ENCODE measurements at regions of chr7 and their contacts with region 1.

Region 1: GRCh38 chr7:143214789-143215679 is 6.8 kb upstream of the TAS2R40 start:
- DNase-seq: peak; percentile 70
- ATAC-seq: peak; percentile 89
- H3K4me3 Mint-ChIP-seq: no peak overlapping the region
- H3K27ac Mint-ChIP-seq: no peak overlapping the region
- H3K4me1 Mint-ChIP-seq: no peaks in the 10 kb centered on the region
- H3K27me3 Mint-ChIP-seq: peaks cover 2% of the 10 kb centered on the region

Region 2: GRCh38 chr7:141975806-141976523 is 1239.1 kb before region 1 on chr7:
- CTCF ChIA-PET with region 1: interaction called, 4 read pairs
- POLR2A ChIA-PET with region 1: no interaction called
- intact Hi-C with region 1: loop called in 1 of 2 experiments (anchors 5 kb)
- DNase-seq: peak; percentile 87
- ATAC-seq: peak; percentile 96
- H3K4me3 Mint-ChIP-seq: peak overlapping the region; percentile 63
- H3K27ac Mint-ChIP-seq: peak overlapping the region; percentile 65
- H3K4me1 Mint-ChIP-seq: peaks cover 10% of the 10 kb centered on the region
- H3K27me3 Mint-ChIP-seq: no peaks in the 10 kb centered on the region

Region 3: DNA sequence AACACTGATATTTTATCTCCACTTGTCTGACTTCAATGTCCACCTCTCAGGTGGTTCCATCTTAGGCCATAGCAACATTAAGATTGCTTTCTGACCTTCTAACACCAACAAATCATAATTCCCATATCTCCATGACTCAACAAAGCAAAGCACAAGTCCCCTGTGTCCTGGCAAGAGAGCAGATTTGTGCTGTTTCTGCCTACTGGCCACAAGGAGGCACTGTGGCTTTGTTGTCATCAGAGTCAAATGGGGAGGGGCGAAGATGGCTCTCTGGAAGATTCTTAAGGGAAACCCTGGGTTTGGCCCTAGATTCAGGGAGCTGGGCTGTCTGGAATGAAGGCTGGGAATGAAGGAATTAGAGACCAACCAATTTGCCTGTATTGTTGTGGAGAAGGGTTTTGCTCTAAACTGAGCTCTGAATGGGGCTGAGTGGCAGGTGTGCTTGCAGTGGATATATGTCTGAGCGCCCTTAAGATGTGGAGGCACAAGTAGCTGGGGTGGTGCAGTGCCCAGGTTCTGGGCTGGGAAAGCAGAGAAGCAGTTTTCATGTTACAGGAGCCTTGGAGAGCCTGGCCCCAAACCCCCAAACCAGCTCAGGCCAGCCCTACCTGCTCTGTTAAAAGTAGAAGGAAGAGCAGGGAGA is 802.4 kb before region 1 on chr7:
- CTCF ChIA-PET with region 1: no interaction called
- POLR2A ChIA-PET with region 1: no interaction called
- intact Hi-C with region 1: loop called in 1 of 2 experiments (anchors 10 kb)
- DNase-seq: peak; percentile 67
- ATAC-seq: peak; percentile 91
- H3K4me3 Mint-ChIP-seq: no peak overlapping the region
- H3K27ac Mint-ChIP-seq: peak overlapping the region; percentile 16
- H3K4me1 Mint-ChIP-seq: peaks cover 2% of the 10 kb centered on the region
- H3K27me3 Mint-ChIP-seq: no peaks in the 10 kb centered on the region

Region 4: DNA sequence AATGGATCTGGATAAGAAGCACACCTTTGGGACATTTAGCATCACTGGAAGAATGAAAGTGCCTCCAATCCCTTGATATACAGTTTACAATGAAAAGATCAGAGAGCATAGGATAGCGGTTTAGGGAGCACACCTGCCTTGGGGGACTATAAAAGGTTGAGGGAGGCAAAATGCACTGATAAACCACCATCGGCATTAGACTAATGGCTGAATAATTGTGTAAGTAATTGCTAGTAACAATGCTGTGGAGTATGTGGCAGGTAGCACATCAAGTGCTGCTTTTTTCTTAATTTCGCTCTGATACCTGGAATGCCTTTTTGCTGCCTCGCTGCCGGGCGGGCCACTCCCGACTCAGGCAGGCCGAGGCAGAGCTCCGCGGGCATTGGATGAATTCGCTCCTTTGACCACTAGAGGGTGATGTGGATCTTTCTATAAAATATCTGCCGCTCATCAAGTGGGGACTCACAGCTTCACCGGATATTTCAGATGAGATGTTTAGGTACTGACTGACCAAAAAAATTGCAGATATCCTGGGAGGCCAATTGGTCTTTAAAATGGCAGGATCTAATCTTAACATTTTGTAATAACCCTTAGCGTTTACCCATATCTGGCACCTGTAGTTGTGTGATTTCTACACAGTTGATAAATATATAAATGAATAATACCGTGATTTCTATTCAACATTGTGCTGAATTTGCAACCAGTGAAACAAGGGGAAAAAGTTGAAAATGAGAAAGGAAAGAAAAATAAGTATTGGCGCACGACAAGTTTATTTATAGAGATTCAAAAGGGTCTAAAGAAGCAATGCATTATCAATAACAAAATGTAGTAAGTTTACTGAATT is 582.5 kb before region 1 on chr7:
- CTCF ChIA-PET with region 1: interaction called, 3 read pairs
- POLR2A ChIA-PET with region 1: no interaction called
- intact Hi-C with region 1: loop called in 1 of 2 experiments (anchors 10 kb)
- DNase-seq: peak; percentile 65
- ATAC-seq: peak; percentile 59
- H3K4me3 Mint-ChIP-seq: peak overlapping the region; percentile 12
- H3K27ac Mint-ChIP-seq: peak overlapping the region; percentile 42
- H3K4me1 Mint-ChIP-seq: peaks cover 10% of the 10 kb centered on the region
- H3K27me3 Mint-ChIP-seq: peaks cover 3% of the 10 kb centered on the region

Region 5: GRCh38 chr7:142880876-142881505 is 334.0 kb before region 1 on chr7:
- CTCF ChIA-PET with region 1: interaction called, 14 read pairs
- POLR2A ChIA-PET with region 1: no interaction called
- intact Hi-C with region 1: loop called in 1 of 2 experiments (anchors 2 kb)
- DNase-seq: peak; percentile 67
- ATAC-seq: peak; percentile 88
- H3K4me3 Mint-ChIP-seq: no peak overlapping the region
- H3K27ac Mint-ChIP-seq: no peak overlapping the region
- H3K4me1 Mint-ChIP-seq: no peaks in the 10 kb centered on the region
- H3K27me3 Mint-ChIP-seq: peaks cover 4% of the 10 kb centered on the region

Region 6: DNA sequence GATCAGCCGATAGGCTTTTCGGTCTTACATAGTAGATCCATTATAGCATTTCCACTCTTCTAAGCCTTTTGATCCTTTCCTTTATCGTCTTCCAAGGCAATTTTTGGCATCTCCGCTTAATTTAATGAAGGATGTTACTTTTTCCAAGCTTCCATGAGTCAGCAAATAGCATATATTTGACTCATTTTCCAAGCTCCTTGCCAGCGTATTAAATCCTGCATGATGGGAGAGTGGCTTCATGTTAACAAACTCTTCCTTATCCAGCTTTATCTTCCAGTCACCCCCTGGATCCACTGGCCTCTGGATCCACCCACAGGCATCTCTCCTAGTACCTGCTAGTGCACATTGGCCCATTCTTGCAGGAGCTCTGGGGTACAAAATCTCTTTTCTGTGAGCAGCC is 201.1 kb before region 1 on chr7:
- CTCF ChIA-PET with region 1: interaction called, 247 read pairs
- POLR2A ChIA-PET with region 1: no interaction called
- intact Hi-C with region 1: no loop called
- DNase-seq: no peak
- ATAC-seq: no peak
- H3K4me3 Mint-ChIP-seq: no peak overlapping the region
- H3K27ac Mint-ChIP-seq: no peak overlapping the region
- H3K4me1 Mint-ChIP-seq: no peaks in the 10 kb centered on the region
- H3K27me3 Mint-ChIP-seq: peaks cover 4% of the 10 kb centered on the region

Region 7: GRCh38 chr7:143347950-143348349 is 132.9 kb after region 1 on chr7:
- CTCF ChIA-PET with region 1: no interaction called
- POLR2A ChIA-PET with region 1: no interaction called
- intact Hi-C with region 1: no loop called
- DNase-seq: no peak
- ATAC-seq: no peak
- H3K4me3 Mint-ChIP-seq: no peak overlapping the region
- H3K27ac Mint-ChIP-seq: no peak overlapping the region
- H3K4me1 Mint-ChIP-seq: peaks cover 8% of the 10 kb centered on the region
- H3K27me3 Mint-ChIP-seq: peaks cover 6% of the 10 kb centered on the region

Measured in activated CD4-positive, alpha-beta T cell treated with anti-CD3 and anti-CD28 coated beads for 36 hours (primary cell).